ENCODE measurements at regions of chr19 and their contacts with region 1.

Region 1: GRCh38 chr19:12139885-12140547 is at the start of gene ZNF20:
- DNase-seq: peak; percentile 91
- ATAC-seq: peak; percentile 98
- H3K4me3 ChIP-seq: peak within 1 kb of the TSS; percentile 96
- H3K27ac ChIP-seq: peak within 1 kb of the TSS; percentile 82
- H3K4me1 ChIP-seq: peaks cover 3% of the 10 kb centered on the region; the same call in 1 of the 2 replicates
- H3K27me3 ChIP-seq: no peaks in the 10 kb centered on the region
- CTCF ChIP-seq: no peak
- POLR2A ChIP-seq: peak; percentile 66
- RAD21 ChIP-seq: no peak
- total RNA-seq, gene ZNF20: 7.8 and 7.9 TPM in 2 replicates

Region 2: DNA sequence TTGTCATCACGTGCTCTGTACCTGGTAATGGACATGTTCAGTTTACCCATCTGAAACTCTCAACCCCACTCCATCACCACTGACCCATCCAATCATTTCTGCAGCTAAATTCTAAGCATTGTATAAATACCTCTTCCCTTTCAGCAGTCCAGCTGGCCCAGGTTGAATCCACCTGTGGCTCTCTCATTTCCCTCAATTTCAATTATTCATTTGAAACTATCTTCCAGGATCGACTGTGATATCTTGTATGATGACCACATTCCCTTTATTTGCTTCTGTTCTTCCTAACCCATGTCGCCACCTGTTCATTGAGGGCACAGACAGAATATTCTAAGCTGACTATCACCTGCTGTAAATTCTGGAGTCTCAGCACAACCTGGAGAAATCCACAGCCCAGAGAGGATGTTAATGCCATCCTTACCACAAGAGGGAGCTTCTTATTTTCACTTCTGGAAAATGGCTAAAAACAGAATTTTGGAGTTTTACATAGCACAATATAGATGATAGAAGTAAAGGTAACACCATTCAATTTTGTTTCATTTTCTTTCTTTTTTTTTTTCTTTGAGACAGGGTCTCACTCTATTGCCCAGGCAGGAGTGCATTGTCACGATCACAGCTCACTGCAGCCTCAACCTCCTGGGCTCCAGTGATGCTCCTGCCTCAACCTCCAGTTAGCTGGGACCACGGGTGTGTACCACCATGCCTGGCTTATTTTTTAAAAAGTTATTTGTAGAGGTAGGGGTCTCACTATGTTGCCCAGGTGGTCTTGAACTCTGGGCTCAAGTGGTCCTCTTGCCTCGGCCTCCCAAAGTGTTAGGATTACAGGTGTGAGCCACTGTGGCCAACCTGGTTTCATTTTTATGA is 439.9 kb before region 1 on chr19:
- CTCF ChIA-PET with region 1: no interaction called
- POLR2A ChIA-PET with region 1: no interaction called
- dilution Hi-C with region 1: no loop called
- in situ Hi-C with region 1: no loop called
- intact Hi-C with region 1: loop called (anchors 5 kb)
- DNase-seq: peak; percentile 42
- ATAC-seq: peak; percentile 78
- H3K4me3 ChIP-seq: no peak overlapping the region
- H3K27ac ChIP-seq: no peak overlapping the region
- H3K4me1 ChIP-seq: no peaks in the 10 kb centered on the region
- H3K27me3 ChIP-seq: peaks cover 2% of the 10 kb centered on the region; the same call in 1 of the 2 replicates
- CTCF ChIP-seq: peak; percentile 67
- POLR2A ChIP-seq: no peak
- RAD21 ChIP-seq: peak; percentile 50

Region 3: GRCh38 chr19:11881151-11881800 is 258.7 kb before region 1 on chr19:
- CTCF ChIA-PET with region 1: interaction called, 3 read pairs
- POLR2A ChIA-PET with region 1: no interaction called
- dilution Hi-C with region 1: no loop called
- in situ Hi-C with region 1: loop called (anchors 5 kb)
- intact Hi-C with region 1: loop called (anchors 1 kb)
- DNase-seq: peak; percentile 51
- ATAC-seq: peak; percentile 87
- H3K4me3 ChIP-seq: no peak overlapping the region
- H3K27ac ChIP-seq: no peak overlapping the region
- H3K4me1 ChIP-seq: no peaks in the 10 kb centered on the region
- H3K27me3 ChIP-seq: no peaks in the 10 kb centered on the region
- CTCF ChIP-seq: peak; percentile 70
- POLR2A ChIP-seq: no peak
- RAD21 ChIP-seq: peak; percentile 88

Region 4: GRCh38 chr19:11931051-11931450 is 209.0 kb before region 1 on chr19:
- CTCF ChIA-PET with region 1: no interaction called
- POLR2A ChIA-PET with region 1: no interaction called
- dilution Hi-C with region 1: no loop called
- in situ Hi-C with region 1: no loop called
- intact Hi-C with region 1: no loop called
- DNase-seq: peak; percentile 48
- ATAC-seq: peak; percentile 61
- H3K4me3 ChIP-seq: no peak overlapping the region
- H3K27ac ChIP-seq: no peak overlapping the region
- H3K4me1 ChIP-seq: peaks cover under 1% of the 10 kb centered on the region; the same call in 1 of the 2 replicates
- H3K27me3 ChIP-seq: no peaks in the 10 kb centered on the region
- CTCF ChIP-seq: no peak
- POLR2A ChIP-seq: no peak
- RAD21 ChIP-seq: no peak

Region 5: GRCh38 chr19:12000152-12000981 is 139.6 kb before region 1 on chr19:
- CTCF ChIA-PET with region 1: no interaction called
- POLR2A ChIA-PET with region 1: no interaction called
- dilution Hi-C with region 1: no loop called
- in situ Hi-C with region 1: no loop called
- intact Hi-C with region 1: no loop called
- DNase-seq: peak; percentile 43
- ATAC-seq: peak; percentile 35
- H3K4me3 ChIP-seq: no peak overlapping the region
- H3K27ac ChIP-seq: no peak overlapping the region
- H3K4me1 ChIP-seq: peaks cover 3% of the 10 kb centered on the region
- H3K27me3 ChIP-seq: no peaks in the 10 kb centered on the region
- CTCF ChIP-seq: no peak
- POLR2A ChIP-seq: no peak
- RAD21 ChIP-seq: no peak

Region 6: GRCh38 chr19:12052497-12053169 is 87.4 kb before region 1 on chr19 and contains the start of gene ZNF878:
- CTCF ChIA-PET with region 1: no interaction called
- POLR2A ChIA-PET with region 1: no interaction called
- dilution Hi-C with region 1: no loop called
- in situ Hi-C with region 1: loop called (anchors 5 kb)
- intact Hi-C with region 1: no loop called
- DNase-seq: peak; percentile 85
- ATAC-seq: peak; percentile 100
- H3K4me3 ChIP-seq: peak within 1 kb of the TSS; percentile 88
- H3K27ac ChIP-seq: peak within 1 kb of the TSS; percentile 73
- H3K4me1 ChIP-seq: no peaks in the 10 kb centered on the region
- H3K27me3 ChIP-seq: no peaks in the 10 kb centered on the region
- CTCF ChIP-seq: no peak; the same call in 1 of the 2 replicates
- POLR2A ChIP-seq: peak; percentile 91
- RAD21 ChIP-seq: no peak
- total RNA-seq, gene ZNF878: 0.28 and 0.36 TPM in 2 replicates

Region 7: DNA sequence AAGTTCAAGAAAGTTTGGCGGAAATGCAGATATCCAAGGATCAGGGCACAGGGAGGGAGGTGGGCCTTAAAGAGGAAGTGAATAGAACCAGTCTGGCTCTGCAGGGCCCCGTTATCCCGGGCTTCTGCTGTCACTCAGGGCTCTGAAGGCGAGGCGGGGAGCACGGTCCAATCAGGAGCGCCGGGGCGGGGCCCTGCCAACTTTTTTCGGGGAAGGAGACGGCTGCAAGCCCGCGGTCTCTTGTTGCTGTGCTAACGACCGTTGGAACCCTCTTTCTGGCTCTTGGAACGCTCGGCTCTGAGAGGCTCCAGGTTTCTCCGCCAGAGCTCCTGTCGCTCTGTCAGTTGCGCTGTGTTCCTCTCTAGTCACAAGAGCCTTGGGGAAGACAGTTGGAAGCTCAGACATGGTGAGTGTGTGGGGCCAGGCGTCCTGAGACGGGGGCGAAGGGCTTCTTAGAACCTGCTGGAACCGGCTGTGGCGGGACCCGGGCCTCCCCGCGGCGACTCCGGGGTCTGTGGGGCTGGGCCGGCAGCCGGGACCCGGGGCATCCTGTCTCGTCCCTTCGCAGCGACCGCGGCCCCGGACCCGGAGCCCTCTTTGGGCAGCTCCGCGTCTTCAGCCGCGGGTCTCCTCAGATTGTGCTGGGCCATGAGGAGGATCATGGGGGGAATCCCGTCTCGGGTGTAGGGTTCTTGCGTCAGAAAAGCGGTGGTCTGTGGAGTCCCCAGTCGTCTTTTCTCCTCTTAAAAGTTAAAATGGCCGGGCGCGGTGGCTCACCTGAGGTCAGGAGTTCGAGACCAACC is 47.8 kb before region 1 on chr19:
- CTCF ChIA-PET with region 1: interaction called, 6 read pairs
- POLR2A ChIA-PET with region 1: no interaction called
- dilution Hi-C with region 1: no loop called
- in situ Hi-C with region 1: no loop called
- intact Hi-C with region 1: loop called (anchors 1 kb)
- DNase-seq: peak; percentile 86
- ATAC-seq: peak; percentile 99
- H3K4me3 ChIP-seq: peak overlapping the region; percentile 91
- H3K27ac ChIP-seq: peak overlapping the region; percentile 82
- H3K4me1 ChIP-seq: 0 out of 2 replicates have a peak, but pooled peaks cover 2% of the 10 kb centered on the region
- H3K27me3 ChIP-seq: no peaks in the 10 kb centered on the region
- CTCF ChIP-seq: no peak
- POLR2A ChIP-seq: no peak
- RAD21 ChIP-seq: no peak

Measured in IMR-90 (cell line).